GM12878 (cell line): ENCODE measurements at regions of chr10 and their contacts with region 1.

Region 1: GRCh38 chr10:106866244-106866845 is 298.2 kb downstream of the SORCS1 start:
- DNase-seq: peak; percentile 58
- ATAC-seq: peak; percentile 68
- H3K4me3 ChIP-seq: no peak overlapping the region
- H3K27ac ChIP-seq: 0 out of 2 replicates have a peak overlapping the region, but pooled peaks have one; percentile 15
- H3K4me1 ChIP-seq: peaks cover 6% of the 10 kb centered on the region; the same call in 1 of the 2 replicates
- H3K27me3 ChIP-seq: no peaks in the 10 kb centered on the region
- CTCF ChIP-seq: peak; percentile 11 to 24 (median 15); a peak in 1 of 6 replicates
- EP300 ChIP-seq: no peak
- POLR2A ChIP-seq: no peak
- RAD21 ChIP-seq: peak; percentile 47

Region 2: DNA sequence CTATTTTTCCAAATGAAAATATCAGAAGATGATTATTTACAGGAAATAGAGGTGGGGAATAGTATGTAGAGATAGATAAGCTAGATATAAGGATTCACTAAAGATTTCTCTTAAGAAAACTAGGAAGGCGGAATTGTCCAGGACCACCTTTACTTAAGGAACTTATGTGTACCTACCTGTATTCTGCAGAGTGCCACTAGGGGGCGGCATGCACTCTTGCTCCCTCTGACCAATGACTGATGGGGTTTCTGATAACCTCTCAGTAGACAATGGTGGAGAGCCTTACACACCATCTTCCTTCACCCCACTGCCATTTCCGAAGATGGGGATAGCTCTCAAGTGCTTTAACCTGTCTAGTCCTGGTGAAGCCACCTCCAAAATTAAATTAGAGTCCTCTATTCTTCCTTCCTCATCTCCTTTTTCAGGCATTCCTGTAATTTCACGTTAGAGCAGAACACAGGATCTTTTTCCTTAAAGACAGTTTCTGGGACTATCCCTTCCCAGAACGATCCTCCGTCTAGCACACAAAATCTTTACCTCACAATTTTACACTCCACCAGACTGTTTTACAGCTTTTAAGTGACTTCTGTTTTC is 154.9 kb before region 1 on chr10:
- CTCF ChIA-PET with region 1: interaction called, 12 read pairs
- POLR2A ChIA-PET with region 1: no interaction called
- RAD21 ChIA-PET with region 1: interaction called, 6 read pairs
- SMC1A ChIA-PET with region 1: interaction called, 7 read pairs
- in situ Hi-C with region 1: no loop called
- intact Hi-C with region 1: no loop called
- DNase-seq: no peak
- ATAC-seq: peak; percentile 57
- H3K4me3 ChIP-seq: no peak overlapping the region
- H3K27ac ChIP-seq: no peak overlapping the region
- H3K4me1 ChIP-seq: no peaks in the 10 kb centered on the region
- H3K27me3 ChIP-seq: no peaks in the 10 kb centered on the region
- CTCF ChIP-seq: peak; percentile 62 to 87 (median 82)
- EP300 ChIP-seq: no peak
- POLR2A ChIP-seq: no peak
- RAD21 ChIP-seq: peak; percentile 73

Region 3: GRCh38 chr10:106992055-106992454 is 125.7 kb after region 1 on chr10:
- CTCF ChIA-PET with region 1: interaction called, 3 read pairs
- POLR2A ChIA-PET with region 1: no interaction called
- RAD21 ChIA-PET with region 1: no interaction called
- SMC1A ChIA-PET with region 1: interaction called, 14 read pairs
- in situ Hi-C with region 1: no loop called
- intact Hi-C with region 1: no loop called
- DNase-seq: no peak
- ATAC-seq: no peak
- H3K4me3 ChIP-seq: no peak overlapping the region
- H3K27ac ChIP-seq: no peak overlapping the region
- H3K4me1 ChIP-seq: peaks cover 3% of the 10 kb centered on the region; the same call in 1 of the 2 replicates
- H3K27me3 ChIP-seq: no peaks in the 10 kb centered on the region
- CTCF ChIP-seq: no peak
- EP300 ChIP-seq: no peak
- POLR2A ChIP-seq: no peak
- RAD21 ChIP-seq: no peak